ENCODE measurements at regions of chr7 and their contacts with region 1.

Region 1: GRCh38 chr7:151876899-151877777 is at the start of gene PRKAG2:
- DNase-seq: peak; percentile 81
- ATAC-seq: peak; percentile 50
- H3K4me3 Mint-ChIP-seq: peak within 1 kb of the TSS; percentile 87
- H3K27ac Mint-ChIP-seq: peak within 1 kb of the TSS; percentile 82
- H3K4me1 Mint-ChIP-seq: peaks cover 14% of the 10 kb centered on the region
- H3K27me3 Mint-ChIP-seq: no peaks in the 10 kb centered on the region
- total RNA-seq, gene PRKAG2: 19.6 to 21.5 TPM

Region 2: DNA sequence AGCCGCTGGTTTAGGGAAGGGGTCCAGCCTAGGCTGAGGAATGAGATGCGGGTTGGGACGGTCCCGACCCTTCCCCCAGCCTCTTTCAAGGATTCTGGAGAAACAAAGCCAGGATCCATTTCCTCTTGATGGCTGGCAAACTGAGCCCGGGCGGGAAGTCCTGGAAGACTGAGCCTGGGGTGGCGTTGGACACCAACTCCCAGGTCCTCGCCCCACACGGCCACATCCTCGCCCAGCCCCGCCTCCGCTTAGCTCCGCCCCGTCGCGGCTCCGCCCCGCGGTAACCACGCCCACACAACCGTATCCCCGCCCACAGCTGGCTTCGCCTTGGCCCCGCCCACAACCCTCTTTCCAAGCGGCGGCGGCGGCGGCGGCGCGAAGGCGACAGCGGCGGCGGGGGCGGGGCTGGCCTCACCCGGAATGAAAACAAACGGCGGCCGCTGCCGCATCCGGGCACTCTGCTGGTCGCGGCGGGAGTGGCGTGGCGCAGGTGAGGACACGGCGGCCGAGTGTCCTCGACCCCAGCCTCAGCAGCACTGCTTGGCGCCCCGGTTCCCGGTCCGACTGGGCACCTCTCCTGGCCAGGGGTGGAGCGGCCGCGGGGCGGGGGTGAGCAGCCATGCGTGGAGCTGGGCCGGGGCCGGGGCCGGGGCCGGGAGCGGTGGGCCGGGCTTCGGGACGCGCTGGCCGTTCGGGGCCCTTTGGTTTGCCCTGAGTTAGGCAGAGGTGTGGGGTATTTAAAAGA is 535.6 kb before region 1 on chr7 and contains the start of gene NUB1:
- CTCF ChIA-PET with region 1: no interaction called
- POLR2A ChIA-PET with region 1: no interaction called
- intact Hi-C with region 1: loop called in 1 of 2 experiments (anchors 5 kb)
- DNase-seq: peak; percentile 96
- ATAC-seq: peak; percentile 82
- H3K4me3 Mint-ChIP-seq: peak within 1 kb of the TSS; percentile 76
- H3K27ac Mint-ChIP-seq: peak within 1 kb of the TSS; percentile 78
- H3K4me1 Mint-ChIP-seq: peaks cover 46% of the 10 kb centered on the region
- H3K27me3 Mint-ChIP-seq: no peaks in the 10 kb centered on the region
- total RNA-seq, gene NUB1: 51.4 to 70.4 TPM

Region 3: GRCh38 chr7:151769188-151769841 is 107.8 kb before region 1 on chr7:
- CTCF ChIA-PET with region 1: no interaction called
- POLR2A ChIA-PET with region 1: interaction called, 4 read pairs
- intact Hi-C with region 1: loop called in 1 of 2 experiments (anchors 1 kb)
- DNase-seq: peak; percentile 49
- ATAC-seq: peak; percentile 85
- H3K4me3 Mint-ChIP-seq: peak overlapping the region; percentile 40
- H3K27ac Mint-ChIP-seq: peak overlapping the region; percentile 93
- H3K4me1 Mint-ChIP-seq: peaks cover 51% of the 10 kb centered on the region
- H3K27me3 Mint-ChIP-seq: no peaks in the 10 kb centered on the region

Region 4: DNA sequence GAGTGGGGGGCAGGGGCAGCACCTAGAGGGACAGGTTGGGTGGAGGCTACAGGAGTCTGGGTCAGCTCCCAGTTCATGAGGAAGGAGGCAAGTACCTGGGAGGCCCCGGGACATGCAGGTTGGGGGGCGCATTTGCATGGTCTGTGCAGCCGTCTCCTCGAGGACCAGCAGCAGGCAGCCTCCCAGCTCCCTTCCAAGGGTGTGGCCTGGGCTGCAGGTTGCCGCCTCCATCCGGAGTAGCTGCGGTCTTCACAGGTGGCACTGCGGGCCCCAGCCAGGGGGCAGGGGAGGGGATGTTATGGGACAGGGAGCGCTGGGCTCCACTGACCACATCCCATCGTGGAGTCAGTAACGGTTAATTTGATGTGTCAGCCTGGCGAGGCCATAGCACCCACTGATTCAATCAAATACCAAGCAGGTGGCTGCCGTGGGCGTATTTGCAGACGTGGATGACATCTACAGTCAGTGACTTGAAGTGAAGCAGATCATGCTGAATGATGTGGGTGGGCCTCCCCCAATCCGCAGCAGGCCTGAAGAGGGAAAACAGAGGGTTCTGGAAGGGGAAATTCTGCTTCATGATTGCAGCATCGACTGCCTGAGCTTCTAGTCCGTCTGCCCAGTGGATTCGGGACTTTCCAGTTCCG is 81.8 kb before region 1 on chr7:
- CTCF ChIA-PET with region 1: no interaction called
- POLR2A ChIA-PET with region 1: no interaction called
- intact Hi-C with region 1: loop called in 1 of 2 experiments (anchors 2 kb)
- DNase-seq: peak; percentile 94
- ATAC-seq: peak; percentile 93
- H3K4me3 Mint-ChIP-seq: no peak overlapping the region
- H3K27ac Mint-ChIP-seq: peak overlapping the region; percentile 67
- H3K4me1 Mint-ChIP-seq: peaks cover 33% of the 10 kb centered on the region
- H3K27me3 Mint-ChIP-seq: no peaks in the 10 kb centered on the region

Region 5: DNA sequence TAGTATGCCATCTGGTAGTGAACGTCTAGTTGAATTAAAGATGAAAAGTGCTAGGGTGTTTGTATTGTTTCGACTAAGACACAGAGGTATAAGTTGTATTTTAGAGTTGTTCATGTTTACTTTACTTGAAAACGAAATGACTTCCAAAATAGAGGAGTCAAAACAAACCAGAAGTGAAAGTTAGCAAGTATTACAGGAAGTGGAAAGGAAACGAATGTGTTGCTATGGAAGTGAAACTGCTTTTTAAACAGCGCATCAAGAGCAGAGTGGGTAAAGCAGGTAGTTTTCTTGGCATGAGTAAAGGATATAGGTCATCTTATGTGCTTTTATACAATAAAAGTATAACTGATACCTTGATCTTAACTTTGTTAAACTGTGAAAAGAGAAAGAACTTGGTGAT is 59.1 kb after region 1 on chr7:
- CTCF ChIA-PET with region 1: interaction called, 3 read pairs
- POLR2A ChIA-PET with region 1: no interaction called
- intact Hi-C with region 1: loop called (anchors 1 to 5 kb)
- DNase-seq: no peak
- ATAC-seq: peak; percentile 88
- H3K4me3 Mint-ChIP-seq: peak overlapping the region; percentile 43
- H3K27ac Mint-ChIP-seq: peak overlapping the region; percentile 84
- H3K4me1 Mint-ChIP-seq: peaks cover 23% of the 10 kb centered on the region
- H3K27me3 Mint-ChIP-seq: no peaks in the 10 kb centered on the region

Region 6: DNA sequence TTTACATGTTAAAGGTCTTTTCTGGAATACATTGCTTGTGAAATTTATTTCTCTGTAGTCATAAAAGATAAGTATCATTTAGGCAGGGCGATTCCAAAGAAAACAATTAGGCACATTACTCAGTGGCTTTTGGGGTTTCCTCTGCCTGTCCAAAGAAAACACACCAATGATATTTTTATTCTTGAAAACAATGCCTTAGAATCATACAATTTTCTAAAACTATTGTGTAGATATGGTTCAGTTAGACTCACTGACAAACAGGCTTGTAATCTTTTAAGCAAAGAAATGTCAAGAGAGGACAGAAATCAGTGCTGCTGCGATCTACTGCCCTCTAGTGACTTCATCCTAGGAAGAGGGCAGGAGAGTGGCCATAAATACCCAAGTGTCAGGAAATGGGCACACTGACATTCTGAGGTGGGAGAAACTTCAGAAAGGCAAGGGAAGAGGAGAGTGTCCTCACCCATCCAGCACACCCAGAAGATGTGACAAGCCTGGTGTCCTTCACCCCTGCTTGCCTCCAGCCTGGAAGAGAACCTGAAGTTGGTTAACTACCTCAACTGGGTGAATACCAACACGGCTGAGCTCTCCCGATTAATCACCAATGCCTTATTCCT is 268.8 kb after region 1 on chr7:
- CTCF ChIA-PET with region 1: no interaction called
- POLR2A ChIA-PET with region 1: no interaction called
- intact Hi-C with region 1: loop called in 1 of 2 experiments (anchors 2 kb)
- DNase-seq: peak; percentile 52
- ATAC-seq: peak; percentile 43
- H3K4me3 Mint-ChIP-seq: no peak overlapping the region
- H3K27ac Mint-ChIP-seq: peak overlapping the region; percentile 93
- H3K4me1 Mint-ChIP-seq: peaks cover 48% of the 10 kb centered on the region
- H3K27me3 Mint-ChIP-seq: no peaks in the 10 kb centered on the region

Region 7: GRCh38 chr7:152463709-152464311 is 586.7 kb after region 1 on chr7:
- CTCF ChIA-PET with region 1: no interaction called
- POLR2A ChIA-PET with region 1: no interaction called
- intact Hi-C with region 1: loop called in 1 of 2 experiments (anchors 1 kb)
- DNase-seq: peak; percentile 100
- ATAC-seq: peak; percentile 95
- H3K4me3 Mint-ChIP-seq: peak overlapping the region; percentile 88
- H3K27ac Mint-ChIP-seq: no peak overlapping the region
- H3K4me1 Mint-ChIP-seq: peaks cover 5% of the 10 kb centered on the region
- H3K27me3 Mint-ChIP-seq: no peaks in the 10 kb centered on the region

Measured in activated CD4-positive, alpha-beta T cell treated with anti-CD3 and anti-CD28 coated beads for 36 hours (primary cell).